GM12878 (cell line): ENCODE measurements at regions of chr15 and their contacts with region 1.

Region 1: GRCh38 chr15:55897560-55898336 is 95.7 kb downstream of the NEDD4 start:
- DNase-seq: no peak
- ATAC-seq: peak; percentile 69
- H3K4me3 ChIP-seq: no peak overlapping the region
- H3K27ac ChIP-seq: no peak overlapping the region
- H3K4me1 ChIP-seq: peaks cover 8% of the 10 kb centered on the region; the same call in 1 of the 2 replicates
- H3K27me3 ChIP-seq: no peaks in the 10 kb centered on the region
- CTCF ChIP-seq: peak; percentile 70 to 88 (median 80)
- EP300 ChIP-seq: no peak
- POLR2A ChIP-seq: no peak
- RAD21 ChIP-seq: peak; percentile 56

Region 2: DNA sequence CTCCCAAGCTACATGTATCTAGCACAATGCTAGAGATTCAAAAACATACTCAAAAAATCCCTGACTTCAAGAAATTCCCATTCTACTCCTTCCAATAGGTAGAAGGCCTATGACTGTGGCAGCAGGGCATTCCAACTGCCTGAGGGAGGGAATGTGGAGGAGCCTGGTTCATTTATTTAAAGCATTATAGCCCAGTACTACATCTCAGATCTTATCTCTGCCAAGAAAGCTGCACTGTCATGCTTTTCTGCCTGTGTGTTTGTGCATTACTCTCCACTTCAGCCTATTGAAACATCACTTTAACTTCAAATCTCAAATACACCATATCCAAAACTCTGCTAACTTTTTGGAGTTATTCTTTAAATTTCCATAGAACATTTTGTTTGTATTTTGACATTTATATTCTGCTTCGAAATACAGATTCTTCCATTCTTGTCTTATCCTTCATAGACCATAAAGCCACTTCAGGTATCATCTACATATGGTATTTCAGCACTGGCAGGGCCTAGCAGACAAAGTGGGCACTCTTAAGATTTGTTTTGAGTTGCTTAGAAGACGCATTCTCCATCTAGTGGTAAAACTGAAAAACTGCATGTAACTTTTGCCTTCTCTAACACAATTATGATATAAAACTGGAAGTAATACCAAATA is 154.8 kb after region 1 on chr15:
- CTCF ChIA-PET with region 1: interaction called, 3 read pairs
- POLR2A ChIA-PET with region 1: no interaction called
- RAD21 ChIA-PET with region 1: no interaction called
- SMC1A ChIA-PET with region 1: no interaction called
- in situ Hi-C with region 1: no loop called
- intact Hi-C with region 1: loop called (anchors 5 kb)
- DNase-seq: no peak
- ATAC-seq: peak; percentile 76
- H3K4me3 ChIP-seq: no peak overlapping the region
- H3K27ac ChIP-seq: no peak overlapping the region
- H3K4me1 ChIP-seq: no peaks in the 10 kb centered on the region
- H3K27me3 ChIP-seq: no peaks in the 10 kb centered on the region
- CTCF ChIP-seq: peak; percentile 60 to 70 (median 61)
- EP300 ChIP-seq: no peak
- POLR2A ChIP-seq: no peak
- RAD21 ChIP-seq: peak; percentile 59